ENCODE measurements at regions of chr17 and their contacts with region 1.

Region 1: GRCh38 chr17:60473788-60474187 is 51.5 kb downstream of the CHCT1 start:
- DNase-seq: no peak
- ATAC-seq: no peak
- H3K4me3 ChIP-seq: no peak overlapping the region
- H3K27ac ChIP-seq: no peak overlapping the region
- H3K4me1 ChIP-seq: peaks cover 5% of the 10 kb centered on the region; the same call in 1 of the 2 replicates
- H3K27me3 ChIP-seq: no peaks in the 10 kb centered on the region
- CTCF ChIP-seq: no peak

Region 2: GRCh38 chr17:58755577-58756245 is 1718.1 kb before region 1 on chr17 and contains the start of gene PPM1E:
- CTCF ChIA-PET with region 1: no interaction called
- POLR2A ChIA-PET with region 1: interaction called, 11 read pairs
- in situ Hi-C with region 1: no loop called
- intact Hi-C with region 1: no loop called
- DNase-seq: no peak
- ATAC-seq: peak; percentile 96
- H3K4me3 ChIP-seq: peak within 1 kb of the TSS; percentile 57 to 70
- H3K27ac ChIP-seq: no peak within 1 kb of the TSS; the same call in 1 of the 2 replicates
- H3K4me1 ChIP-seq: no peaks in the 10 kb centered on the region
- H3K27me3 ChIP-seq: peaks cover 9% of the 10 kb centered on the region
- CTCF ChIP-seq: no peak
- total RNA-seq, gene PPM1E: 2.9 TPM

Region 3: GRCh38 chr17:61122326-61122913 is 648.6 kb after region 1 on chr17:
- CTCF ChIA-PET with region 1: no interaction called
- POLR2A ChIA-PET with region 1: no interaction called
- in situ Hi-C with region 1: no loop called
- intact Hi-C with region 1: no loop called
- DNase-seq: no peak
- ATAC-seq: no peak
- H3K4me3 ChIP-seq: no peak overlapping the region
- H3K27ac ChIP-seq: peak overlapping the region; percentile 0; the same call in 1 of the 2 replicates
- H3K4me1 ChIP-seq: no peaks in the 10 kb centered on the region; the same call in 1 of the 2 replicates
- H3K27me3 ChIP-seq: no peaks in the 10 kb centered on the region
- CTCF ChIP-seq: no peak